Activated CD8-positive, alpha-beta memory T cell treated with anti-CD3 and anti-CD28 coated beads, Interleukin-2, amount 10 ng/mL, durations not matched to agents 7 days and 5 days (primary cell): ENCODE measurements at regions of chr7 and their contacts with region 1.

Region 1: GRCh38 chr7:148884299-148885022 is 370 bp upstream of the EZH2 start:
- DNase-seq: peak; percentile 95
- ATAC-seq: peak; percentile 94
- H3K4me3 Mint-ChIP-seq: peak overlapping the region; percentile 96
- H3K27ac Mint-ChIP-seq: peak overlapping the region; percentile 99
- H3K4me1 Mint-ChIP-seq: peaks cover 35% of the 10 kb centered on the region
- H3K27me3 Mint-ChIP-seq: no peaks in the 10 kb centered on the region

Region 2: DNA sequence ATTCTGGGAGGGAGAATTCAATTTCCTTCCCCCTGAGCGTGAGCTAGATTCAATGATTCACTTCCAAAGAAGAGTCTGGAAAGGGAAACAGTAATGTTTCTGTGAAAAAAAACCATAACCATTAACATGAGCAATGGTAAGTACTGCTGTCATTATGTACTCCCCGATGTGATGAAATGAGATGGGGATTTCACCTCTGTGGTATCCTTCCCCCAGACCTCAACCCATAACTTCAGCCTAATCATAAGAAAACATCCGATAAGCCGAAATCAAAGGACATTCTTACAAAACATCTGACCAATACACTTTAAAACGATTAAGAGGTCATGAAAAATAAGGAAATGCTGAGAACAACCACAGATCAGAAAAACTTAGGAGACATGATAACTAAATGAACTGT is 27.6 kb before region 1 on chr7:
- CTCF ChIA-PET with region 1: interaction called, 11 read pairs
- DNase-seq: peak; percentile 50
- ATAC-seq: peak; percentile 50
- H3K4me3 Mint-ChIP-seq: peak overlapping the region; percentile 18
- H3K27ac Mint-ChIP-seq: peak overlapping the region; percentile 53
- H3K4me1 Mint-ChIP-seq: peaks cover 43% of the 10 kb centered on the region
- H3K27me3 Mint-ChIP-seq: no peaks in the 10 kb centered on the region

Region 3: GRCh38 chr7:148905093-148905666 is 20.7 kb after region 1 on chr7:
- CTCF ChIA-PET with region 1: no interaction called
- DNase-seq: no peak
- ATAC-seq: no peak
- H3K4me3 Mint-ChIP-seq: no peak overlapping the region
- H3K27ac Mint-ChIP-seq: no peak overlapping the region
- H3K4me1 Mint-ChIP-seq: no peaks in the 10 kb centered on the region
- H3K27me3 Mint-ChIP-seq: peaks cover 17% of the 10 kb centered on the region